Panc1 (cell line): ENCODE measurements at regions of chr7 and their contacts with region 1.

Region 1: GRCh38 chr7:39894904-39895303 is 55.2 kb upstream of the CDK13 start:
- DNase-seq: no peak
- ATAC-seq: peak; percentile 51; the same call in 1 of the 2 replicates
- H3K4me3 ChIP-seq: no peak overlapping the region
- H3K27ac ChIP-seq: no peak overlapping the region
- H3K4me1 ChIP-seq: no peaks in the 10 kb centered on the region
- H3K27me3 ChIP-seq: peaks cover 8% of the 10 kb centered on the region; the same call in 1 of the 2 replicates
- CTCF ChIP-seq: no peak

Region 2: DNA sequence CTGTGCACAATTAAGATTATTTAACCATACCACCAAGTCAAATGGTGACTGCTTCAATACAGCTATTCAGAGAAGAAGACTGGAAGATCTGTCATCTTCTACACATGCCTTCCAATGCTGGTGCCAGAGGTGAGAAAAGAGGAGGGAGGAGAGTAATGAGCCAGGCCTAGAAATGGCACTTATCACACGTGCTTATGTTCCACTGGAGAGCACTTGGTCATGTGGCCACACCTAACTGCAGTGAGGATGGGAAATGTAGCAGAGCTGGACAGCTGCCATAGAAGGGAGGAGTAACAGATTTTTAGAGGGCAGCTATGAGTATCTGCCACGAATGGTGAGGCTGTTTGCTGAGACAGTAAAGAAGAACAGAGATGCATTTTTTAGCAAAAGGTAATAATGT is 162.4 kb after region 1 on chr7:
- CTCF ChIA-PET with region 1: interaction called, 14 read pairs
- POLR2A ChIA-PET with region 1: no interaction called
- in situ Hi-C with region 1: no loop called
- intact Hi-C with region 1: loop called (anchors 1 kb)
- DNase-seq: no peak
- ATAC-seq: no peak
- H3K4me3 ChIP-seq: no peak overlapping the region
- H3K27ac ChIP-seq: no peak overlapping the region
- H3K4me1 ChIP-seq: no peaks in the 10 kb centered on the region
- H3K27me3 ChIP-seq: no peaks in the 10 kb centered on the region
- CTCF ChIP-seq: no peak